ENCODE measurements at regions of chr1 and their contacts with region 1.

Region 1: DNA sequence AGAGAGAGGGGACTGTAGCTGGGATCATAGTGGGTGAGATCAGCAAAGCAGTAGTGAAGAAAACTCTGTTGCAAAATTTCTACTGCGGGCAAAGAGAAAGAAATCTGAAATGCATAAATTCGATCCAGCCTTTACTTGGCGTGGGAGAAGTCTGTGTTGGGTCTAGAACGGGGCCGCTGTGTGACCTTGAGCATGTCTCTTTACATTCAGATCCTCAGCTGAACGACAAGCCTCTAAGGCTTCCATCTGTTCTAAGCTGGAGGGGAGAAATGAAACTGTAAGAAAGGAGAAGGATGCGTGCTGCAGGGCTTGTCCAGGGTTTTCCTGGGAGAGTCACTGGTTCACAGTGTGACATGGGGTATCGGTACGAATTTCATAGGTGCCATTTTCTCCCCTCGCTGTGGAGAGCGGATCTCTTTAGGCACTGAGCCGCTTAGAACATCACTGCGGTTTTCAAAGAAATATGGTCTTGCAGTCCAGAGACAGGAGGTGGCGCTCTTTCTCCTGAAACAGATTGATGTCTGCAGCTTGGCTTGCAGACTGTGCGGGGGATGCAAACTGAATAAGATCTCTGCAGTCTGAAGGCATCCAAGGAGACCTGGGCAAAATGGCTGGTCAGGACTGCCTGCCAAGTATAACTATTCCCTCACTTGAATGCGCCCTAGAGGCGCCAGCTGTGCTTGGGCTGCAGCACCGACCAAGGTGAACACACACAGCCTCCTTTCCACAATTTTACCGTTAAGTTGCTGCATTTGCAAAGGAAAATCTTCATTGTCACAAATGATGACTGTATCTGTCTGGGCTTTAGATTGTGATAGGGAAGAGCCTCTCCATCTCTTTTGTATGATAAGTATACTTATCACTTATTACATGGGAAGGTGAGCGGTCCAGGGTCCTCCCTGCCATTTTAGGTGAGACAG is 104.1 kb downstream of the XCL2 start:
- DNase-seq: peak; percentile 30 to 92 (median 74)
- H3K4me3 ChIP-seq: peak overlapping the region in 43 of 59 donors; percentile 5 to 53 (median 32)
- H3K27ac ChIP-seq: peak overlapping the region in 41 of 59 donors; percentile 9 to 83 (median 61)
- H3K27me3 ChIP-seq: peaks cover 0 to 2% (median 0%) of the 10 kb centered on the region in 45 donors
- CTCF ChIP-seq: peak; percentile 53 to 84 (median 74)

Region 2: DNA sequence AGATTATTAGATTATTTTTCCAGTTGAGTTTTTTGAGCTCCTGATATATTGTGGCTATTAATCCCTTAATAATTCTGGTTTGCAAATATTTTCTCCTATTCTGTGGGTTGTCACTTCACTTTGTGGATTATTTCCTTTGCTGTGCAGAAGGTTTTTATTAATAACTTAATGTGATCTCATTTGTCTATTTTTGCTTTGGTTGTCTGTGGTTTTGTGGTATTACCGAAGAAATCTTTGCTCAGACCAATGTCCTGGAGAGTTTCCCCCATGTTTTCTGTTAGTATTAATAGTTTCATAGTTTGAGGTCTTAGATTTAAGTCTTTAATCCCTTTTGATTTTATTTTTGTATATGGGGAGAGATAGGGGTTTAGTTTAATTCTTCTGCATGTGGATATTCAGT is 166.1 kb before region 1 on chr1:
- intact Hi-C with region 1: no loop called
- DNase-seq: no peak
- H3K4me3 ChIP-seq: no peak overlapping the region
- H3K27ac ChIP-seq: no peak overlapping the region
- H3K27me3 ChIP-seq: no peaks in the 10 kb centered on the region
- CTCF ChIP-seq: no peak

Region 3: GRCh38 chr1:168520052-168520751 is 80.5 kb after region 1 on chr1:
- intact Hi-C with region 1: no loop called
- DNase-seq: no peak
- H3K4me3 ChIP-seq: no peak overlapping the region
- H3K27ac ChIP-seq: no peak overlapping the region
- H3K27me3 ChIP-seq: peaks cover 0 to 12% (median 0%) of the 10 kb centered on the region in 45 donors
- CTCF ChIP-seq: no peak

Region 4: DNA sequence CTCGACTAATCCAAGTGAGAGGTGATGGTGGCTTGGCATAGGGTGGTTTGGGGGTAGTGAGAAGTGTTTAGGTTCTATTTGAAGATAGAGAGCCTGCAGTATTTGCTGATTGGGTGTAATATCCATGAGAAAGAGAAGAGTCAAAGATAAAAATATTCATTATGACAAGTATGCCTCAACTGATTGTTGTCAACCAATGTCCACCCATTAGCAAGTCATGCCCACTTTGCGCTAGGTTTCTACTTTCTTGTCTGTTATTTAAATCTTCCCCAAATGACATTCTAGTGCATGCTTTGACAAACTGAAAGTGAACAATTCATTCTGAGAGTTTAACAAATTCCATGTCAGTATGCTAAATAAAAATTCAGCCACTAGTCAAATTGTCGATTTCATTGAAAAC is 132.9 kb after region 1 on chr1:
- intact Hi-C with region 1: loop called in 1 of 2 experiments (anchors 5 kb)
- DNase-seq: no peak
- H3K4me3 ChIP-seq: no peak overlapping the region
- H3K27ac ChIP-seq: no peak overlapping the region
- H3K27me3 ChIP-seq: peaks cover 0 to 4% (median 0%) of the 10 kb centered on the region in 45 donors
- CTCF ChIP-seq: no peak

Region 5: DNA sequence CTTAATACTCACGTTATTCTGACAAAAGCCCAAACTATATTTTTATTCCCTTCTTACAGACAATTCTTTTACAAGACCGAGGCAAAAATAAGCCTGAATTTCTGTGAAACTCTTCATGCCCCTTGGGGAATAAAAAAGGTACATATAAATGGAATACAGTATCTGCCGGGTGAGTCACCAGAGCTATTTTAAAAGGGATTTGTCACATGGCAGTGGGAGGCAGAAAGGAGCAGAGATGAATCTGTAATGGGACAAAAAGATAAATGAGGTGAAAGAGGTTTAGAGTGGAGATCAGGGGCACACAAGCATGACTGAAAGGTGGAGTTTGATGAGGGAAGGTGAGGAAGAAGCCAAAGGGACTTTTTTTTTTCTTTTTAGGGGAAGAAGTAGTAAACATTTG is 145.5 kb after region 1 on chr1:
- intact Hi-C with region 1: loop called in 1 of 2 experiments (anchors 10 kb)
- DNase-seq: peak in 4 of 10 donors; percentile 9 to 54 (median 42)
- H3K4me3 ChIP-seq: no peak overlapping the region
- H3K27ac ChIP-seq: peak overlapping the region in 39 of 59 donors; percentile 6 to 83 (median 69)
- H3K27me3 ChIP-seq: no peaks in the 10 kb centered on the region
- CTCF ChIP-seq: no peak

Region 6: DNA sequence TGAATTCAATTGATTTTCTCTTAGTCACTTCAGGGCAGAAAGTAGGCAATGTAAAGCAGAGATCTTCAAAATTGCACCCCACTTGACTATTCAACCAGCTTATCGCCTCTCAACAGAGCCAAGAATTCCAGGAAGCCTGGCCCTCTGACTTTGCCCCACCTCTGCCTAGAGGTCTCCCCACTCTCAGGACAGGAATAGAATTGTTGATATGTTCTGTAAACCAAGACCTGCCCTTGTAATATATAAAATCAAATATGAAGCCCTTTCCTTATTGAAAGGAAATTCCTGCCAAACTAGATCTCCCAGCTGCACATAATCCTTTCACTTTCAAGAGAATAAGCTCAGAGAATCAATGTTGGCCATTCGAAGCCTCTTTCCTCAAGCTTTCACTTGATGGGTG is 405.4 kb after region 1 on chr1:
- intact Hi-C with region 1: no loop called
- DNase-seq: no peak
- H3K4me3 ChIP-seq: no peak overlapping the region
- H3K27ac ChIP-seq: peak overlapping the region in 30 of 59 donors; percentile 5 to 90 (median 68)
- H3K27me3 ChIP-seq: no peaks in the 10 kb centered on the region
- CTCF ChIP-seq: no peak